ENCODE measurements at regions of chr17 and their contacts with region 1.

Region 1: DNA sequence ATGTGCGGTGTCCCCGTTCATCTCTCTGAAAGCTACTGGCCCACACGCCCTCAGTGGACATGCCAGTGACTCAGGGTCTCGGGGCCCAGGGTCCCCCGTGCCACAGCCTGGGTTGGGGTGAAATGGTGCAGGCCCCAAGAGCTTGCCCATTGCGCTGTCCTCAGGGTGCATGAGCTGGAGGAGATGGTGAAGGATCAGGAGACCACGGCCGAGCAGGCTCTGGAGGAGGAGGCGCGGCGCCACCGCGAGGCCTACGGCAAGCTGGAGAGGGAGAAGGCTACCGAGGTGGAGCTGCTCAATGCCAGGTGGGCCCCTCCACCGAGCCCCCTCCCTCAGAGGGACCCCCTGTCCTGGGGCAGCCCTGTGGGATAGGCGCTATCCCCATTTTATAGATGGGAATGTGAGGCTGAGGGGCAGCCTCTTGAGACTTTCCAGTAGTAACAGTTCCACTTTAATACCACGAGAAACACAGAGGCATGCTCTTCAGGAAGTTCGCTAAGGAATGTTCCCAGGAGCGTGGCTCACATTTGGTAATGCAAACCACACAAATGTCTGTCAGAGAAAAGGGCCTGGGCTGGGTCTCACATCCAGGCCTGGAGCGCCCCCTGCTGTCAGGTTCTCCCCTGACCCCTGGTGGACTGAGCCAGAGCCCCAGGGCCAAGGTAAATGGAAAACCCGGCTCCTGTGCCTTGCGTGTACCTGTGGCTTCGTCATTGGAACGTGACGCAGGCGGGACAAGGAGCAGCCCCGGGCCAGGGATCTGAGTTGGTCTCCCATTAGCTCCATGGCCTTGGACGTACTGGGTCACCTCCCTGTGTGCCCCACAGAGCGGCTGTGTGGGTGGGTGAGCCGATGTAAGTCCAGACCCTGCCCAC is 133.7 kb downstream of the RAB11FIP4 start:
- DNase-seq: peak; percentile 47
- H3K4me3 ChIP-seq: no peak overlapping the region
- H3K27me3 ChIP-seq: no peaks in the 10 kb centered on the region
- CTCF ChIP-seq: peak; percentile 95

Region 2: GRCh38 chr17:31388770-31389661 is 136.1 kb before region 1 on chr17:
- CTCF ChIA-PET with region 1: interaction called, 10 read pairs
- POLR2A ChIA-PET with region 1: no interaction called
- DNase-seq: no peak
- H3K4me3 ChIP-seq: no peak overlapping the region
- H3K27me3 ChIP-seq: peaks cover 18% of the 10 kb centered on the region
- CTCF ChIP-seq: peak; percentile 73